AG04449 (cell line): ENCODE measurements at regions of chr5 and their contacts with region 1.

Region 1: GRCh38 chr5:178075840-178076548 is 37.3 kb upstream of the N4BP3 start:
- DNase-seq: no peak
- H3K4me3 ChIP-seq: no peak overlapping the region
- CTCF ChIP-seq: peak; percentile 81

Region 2: GRCh38 chr5:178146020-178146820 is 70.2 kb after region 1 on chr5:
- CTCF ChIA-PET with region 1: interaction called, 61 read pairs
- POLR2A ChIA-PET with region 1: no interaction called
- DNase-seq: peak; percentile 19
- H3K4me3 ChIP-seq: no peak overlapping the region
- CTCF ChIP-seq: peak; percentile 77

Region 3: GRCh38 chr5:178153573-178154343 is 77.8 kb after region 1 on chr5 and contains the start of gene NHP2:
- CTCF ChIA-PET with region 1: interaction called, 61 read pairs
- POLR2A ChIA-PET with region 1: interaction called, 3 read pairs
- DNase-seq: peak; percentile 88
- H3K4me3 ChIP-seq: peak within 1 kb of the TSS; percentile 82
- CTCF ChIP-seq: no peak

Region 4: DNA sequence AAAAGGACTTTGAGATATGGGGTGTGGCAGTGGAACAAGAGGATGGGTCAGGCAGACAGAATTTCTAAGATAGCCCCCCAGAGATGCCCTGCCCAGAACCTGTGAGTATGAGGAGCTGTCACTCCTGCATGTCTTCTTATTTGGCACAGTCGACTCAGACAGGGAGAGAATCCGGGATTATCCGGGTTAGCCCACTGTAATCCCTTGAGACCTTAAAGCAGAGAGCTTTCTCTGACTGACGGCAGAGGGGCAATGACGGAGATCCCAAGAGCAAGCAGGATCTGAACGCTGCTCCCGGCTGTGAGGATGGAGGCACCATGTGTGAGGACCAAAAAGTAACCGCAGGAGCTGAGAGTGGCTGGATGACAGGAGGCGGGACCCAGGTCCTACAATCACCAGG is 86.5 kb after region 1 on chr5:
- CTCF ChIA-PET with region 1: interaction called, 33 read pairs
- POLR2A ChIA-PET with region 1: no interaction called
- DNase-seq: no peak
- H3K4me3 ChIP-seq: no peak overlapping the region
- CTCF ChIP-seq: no peak